ENCODE measurements at regions of chr2 and their contacts with region 1.

Region 1: GRCh38 chr2:172172513-172173173 is 69.9 kb upstream of the DLX2 start:
- DNase-seq: peak; percentile 75 to 98
- H3K4me3 ChIP-seq: peak overlapping the region; percentile 76
- H3K27ac ChIP-seq: no peak overlapping the region
- H3K4me1 ChIP-seq: peaks cover 17% of the 10 kb centered on the region
- H3K27me3 ChIP-seq: no peaks in the 10 kb centered on the region
- CTCF ChIP-seq: peak; percentile 98

Region 2: GRCh38 chr2:171109571-171109970 is 1063.1 kb before region 1 on chr2:
- CTCF ChIA-PET with region 1: no interaction called
- POLR2A ChIA-PET with region 1: no interaction called
- intact Hi-C with region 1: loop called (anchors 5 kb)
- DNase-seq: no peak
- H3K4me3 ChIP-seq: no peak overlapping the region
- H3K27ac ChIP-seq: no peak overlapping the region
- H3K4me1 ChIP-seq: no peaks in the 10 kb centered on the region
- H3K27me3 ChIP-seq: no peaks in the 10 kb centered on the region
- CTCF ChIP-seq: no peak

Region 3: GRCh38 chr2:171837736-171838135 is 334.9 kb before region 1 on chr2:
- CTCF ChIA-PET with region 1: no interaction called
- POLR2A ChIA-PET with region 1: no interaction called
- intact Hi-C with region 1: no loop called
- DNase-seq: no peak
- H3K4me3 ChIP-seq: no peak overlapping the region
- H3K27ac ChIP-seq: no peak overlapping the region
- H3K4me1 ChIP-seq: no peaks in the 10 kb centered on the region
- H3K27me3 ChIP-seq: no peaks in the 10 kb centered on the region
- CTCF ChIP-seq: no peak

Region 4: DNA sequence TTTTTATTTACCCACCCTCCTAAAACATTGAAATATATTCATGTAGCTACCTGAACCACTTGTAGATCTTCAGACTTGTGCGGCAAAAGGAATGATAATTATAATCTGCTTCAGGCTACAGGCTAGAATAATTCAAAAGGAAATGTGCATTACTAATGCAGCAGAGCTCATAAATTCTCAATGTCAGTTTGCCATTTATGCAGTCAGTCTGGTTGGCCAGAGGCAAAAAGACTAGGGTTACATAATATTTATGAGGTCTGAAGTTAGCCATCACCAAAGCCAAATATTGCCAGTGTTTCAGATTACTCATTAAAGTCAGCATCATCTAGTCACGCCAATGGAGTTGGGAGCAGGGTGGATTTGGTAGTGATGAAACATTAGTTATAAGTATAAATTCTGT is 134.0 kb before region 1 on chr2:
- CTCF ChIA-PET with region 1: no interaction called
- POLR2A ChIA-PET with region 1: no interaction called
- intact Hi-C with region 1: no loop called
- DNase-seq: peak in 1 of 2 experiments; percentile 96
- H3K4me3 ChIP-seq: no peak overlapping the region
- H3K27ac ChIP-seq: peak overlapping the region; percentile 33; the same call in 1 of the 2 replicates
- H3K4me1 ChIP-seq: peaks cover 20% of the 10 kb centered on the region
- H3K27me3 ChIP-seq: no peaks in the 10 kb centered on the region
- CTCF ChIP-seq: no peak

Region 5: GRCh38 chr2:172200495-172201085 is 27.9 kb after region 1 on chr2:
- CTCF ChIA-PET with region 1: interaction called, 16 read pairs
- POLR2A ChIA-PET with region 1: no interaction called
- intact Hi-C with region 1: no loop called
- DNase-seq: no peak
- H3K4me3 ChIP-seq: no peak overlapping the region
- H3K27ac ChIP-seq: no peak overlapping the region
- H3K4me1 ChIP-seq: peaks cover 8% of the 10 kb centered on the region
- H3K27me3 ChIP-seq: no peaks in the 10 kb centered on the region
- CTCF ChIP-seq: peak; percentile 84

Region 6: DNA sequence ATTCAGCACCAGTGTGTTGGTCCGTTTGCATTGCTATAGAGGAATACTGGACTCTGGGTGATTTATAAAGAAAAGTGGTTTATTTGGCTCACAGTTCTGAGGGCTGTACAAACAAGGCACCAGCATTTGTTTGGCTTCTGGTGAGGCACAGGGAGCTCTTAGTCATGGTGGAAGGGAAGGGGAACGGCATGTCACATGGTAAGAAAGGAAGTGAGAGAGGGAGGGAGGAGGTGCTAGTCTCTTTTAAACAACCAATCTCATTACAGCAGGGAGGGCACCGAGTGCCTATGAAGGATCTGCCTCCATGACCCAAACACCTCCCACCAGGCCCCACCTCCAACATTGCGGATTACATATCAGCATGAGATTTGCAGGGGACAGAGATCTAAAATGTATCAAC is 74.0 kb after region 1 on chr2:
- CTCF ChIA-PET with region 1: interaction called, 3 read pairs
- POLR2A ChIA-PET with region 1: interaction called, 8 read pairs
- intact Hi-C with region 1: loop called (anchors 1 kb)
- DNase-seq: peak in 1 of 2 experiments; percentile 46
- H3K4me3 ChIP-seq: no peak overlapping the region
- H3K27ac ChIP-seq: peak overlapping the region; percentile 70
- H3K4me1 ChIP-seq: peaks cover 62% of the 10 kb centered on the region
- H3K27me3 ChIP-seq: no peaks in the 10 kb centered on the region
- CTCF ChIP-seq: no peak

Region 7: GRCh38 chr2:172427256-172427989 is 254.8 kb after region 1 on chr2 and contains the start of gene ITGA6:
- CTCF ChIA-PET with region 1: interaction called, 5 read pairs
- POLR2A ChIA-PET with region 1: interaction called, 3 read pairs
- intact Hi-C with region 1: loop called (anchors 1 kb)
- DNase-seq: peak; percentile 87 to 96
- H3K4me3 ChIP-seq: peak within 1 kb of the TSS; percentile 57
- H3K27ac ChIP-seq: peak within 1 kb of the TSS; percentile 52
- H3K4me1 ChIP-seq: peaks cover 45% of the 10 kb centered on the region
- H3K27me3 ChIP-seq: no peaks in the 10 kb centered on the region
- CTCF ChIP-seq: peak; percentile 43; the same call in 1 of the 2 replicates
- total RNA-seq, gene ITGA6: 180 and 213 TPM in 2 replicates

Region 8: GRCh38 chr2:172710584-172711024 is 538.0 kb after region 1 on chr2:
- CTCF ChIA-PET with region 1: no interaction called
- POLR2A ChIA-PET with region 1: no interaction called
- intact Hi-C with region 1: loop called (anchors 2 kb)
- DNase-seq: peak; percentile 82 to 100
- H3K4me3 ChIP-seq: no peak overlapping the region
- H3K27ac ChIP-seq: no peak overlapping the region
- H3K4me1 ChIP-seq: peaks cover 10% of the 10 kb centered on the region
- H3K27me3 ChIP-seq: no peaks in the 10 kb centered on the region
- CTCF ChIP-seq: peak; percentile 99

Region 9: GRCh38 chr2:173231042-173231441 is 1058.4 kb after region 1 on chr2:
- CTCF ChIA-PET with region 1: no interaction called
- POLR2A ChIA-PET with region 1: no interaction called
- intact Hi-C with region 1: no loop called
- DNase-seq: no peak
- H3K4me3 ChIP-seq: no peak overlapping the region
- H3K27ac ChIP-seq: no peak overlapping the region
- H3K4me1 ChIP-seq: no peaks in the 10 kb centered on the region
- H3K27me3 ChIP-seq: no peaks in the 10 kb centered on the region
- CTCF ChIP-seq: no peak